ENCODE measurements at regions of chrX and their contacts with region 1.

Region 1: DNA sequence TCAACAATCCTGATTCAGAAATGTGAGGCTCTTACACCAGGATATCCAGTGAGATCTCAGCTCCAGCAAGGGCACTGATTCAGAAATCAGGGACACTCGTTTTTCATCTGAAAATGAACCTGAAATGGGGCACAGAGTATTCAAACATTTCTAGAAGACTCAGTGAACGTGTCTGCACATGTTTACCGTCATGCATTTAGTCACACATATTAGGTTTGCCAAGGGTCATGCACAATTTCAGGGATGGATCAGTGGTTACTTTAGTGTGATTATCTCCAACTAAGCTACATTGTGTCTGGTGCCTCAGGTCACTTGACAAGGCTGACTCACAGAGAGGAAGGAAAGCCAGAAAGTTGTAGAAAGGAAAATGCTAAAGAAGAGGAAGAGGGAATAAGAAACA is 33.6 kb upstream of the SPANXN2 start:
- DNase-seq: no peak
- H3K4me3 ChIP-seq: no peak overlapping the region
- H3K27ac ChIP-seq: no peak overlapping the region
- H3K4me1 ChIP-seq: no peaks in the 10 kb centered on the region
- H3K27me3 ChIP-seq: no peaks in the 10 kb centered on the region
- CTCF ChIP-seq: no peak
- EP300 ChIP-seq: no peak
- POLR2A ChIP-seq: no peak

Region 2: GRCh38 chrX:143726296-143726695 is 27.9 kb before region 1 on chrX:
- in situ Hi-C with region 1: no loop called
- intact Hi-C with region 1: loop called (anchors 2 kb)
- DNase-seq: no peak
- H3K4me3 ChIP-seq: no peak overlapping the region
- H3K27ac ChIP-seq: no peak overlapping the region
- H3K4me1 ChIP-seq: no peaks in the 10 kb centered on the region
- H3K27me3 ChIP-seq: no peaks in the 10 kb centered on the region
- CTCF ChIP-seq: no peak
- EP300 ChIP-seq: no peak
- POLR2A ChIP-seq: no peak

Region 3: GRCh38 chrX:143733866-143734265 is 20.3 kb before region 1 on chrX:
- in situ Hi-C with region 1: no loop called
- intact Hi-C with region 1: loop called (anchors 1 kb)
- DNase-seq: no peak
- H3K4me3 ChIP-seq: no peak overlapping the region
- H3K27ac ChIP-seq: no peak overlapping the region
- H3K4me1 ChIP-seq: no peaks in the 10 kb centered on the region
- H3K27me3 ChIP-seq: no peaks in the 10 kb centered on the region
- CTCF ChIP-seq: no peak
- EP300 ChIP-seq: no peak
- POLR2A ChIP-seq: no peak